Activated CD4-positive, alpha-beta T cell treated with anti-CD3 and anti-CD28 coated beads, Interleukin-2, amount 10 ng/mL, durations not matched to agents 24 days and 14 days (primary cell): ENCODE measurements at regions of chr11 and their contacts with region 1.

Region 1: GRCh38 chr11:105044921-105045524 is at the start of gene CARD16:
- DNase-seq: peak; percentile 85
- H3K4me3 Mint-ChIP-seq: peak within 1 kb of the TSS; percentile 88
- H3K27ac Mint-ChIP-seq: peak within 1 kb of the TSS; percentile 83
- H3K4me1 Mint-ChIP-seq: peaks cover 35% of the 10 kb centered on the region
- H3K27me3 Mint-ChIP-seq: no peaks in the 10 kb centered on the region
- total RNA-seq, gene CARD16: 7.2 and 9.0 TPM in 2 replicates

Region 2: GRCh38 chr11:104817973-104818372 is 227.1 kb before region 1 on chr11:
- intact Hi-C with region 1: no loop called
- DNase-seq: no peak
- H3K4me3 Mint-ChIP-seq: no peak overlapping the region
- H3K27ac Mint-ChIP-seq: no peak overlapping the region
- H3K4me1 Mint-ChIP-seq: peaks cover 2% of the 10 kb centered on the region
- H3K27me3 Mint-ChIP-seq: peaks cover 3% of the 10 kb centered on the region

Region 3: GRCh38 chr11:105034813-105035620 is 10.0 kb before region 1 on chr11 and contains the start of gene CASP1:
- intact Hi-C with region 1: loop called (anchors 1 kb)
- DNase-seq: peak; percentile 83
- H3K4me3 Mint-ChIP-seq: peak within 1 kb of the TSS; percentile 88
- H3K27ac Mint-ChIP-seq: peak within 1 kb of the TSS; percentile 91
- H3K4me1 Mint-ChIP-seq: peaks cover 38% of the 10 kb centered on the region
- H3K27me3 Mint-ChIP-seq: no peaks in the 10 kb centered on the region
- total RNA-seq, gene CASP1: 18.7 and 21.6 TPM in 2 replicates

Region 4: GRCh38 chr11:105078283-105078682 is 33.3 kb after region 1 on chr11:
- intact Hi-C with region 1: loop called (anchors 5 kb)
- DNase-seq: no peak
- H3K4me3 Mint-ChIP-seq: no peak overlapping the region
- H3K27ac Mint-ChIP-seq: no peak overlapping the region
- H3K4me1 Mint-ChIP-seq: peaks cover 18% of the 10 kb centered on the region
- H3K27me3 Mint-ChIP-seq: peaks cover 8% of the 10 kb centered on the region

Region 5: GRCh38 chr11:105100206-105100605 is 55.2 kb after region 1 on chr11:
- intact Hi-C with region 1: loop called (anchors 5 kb)
- DNase-seq: peak; percentile 74
- H3K4me3 Mint-ChIP-seq: peak overlapping the region; percentile 85
- H3K27ac Mint-ChIP-seq: peak overlapping the region; percentile 81
- H3K4me1 Mint-ChIP-seq: peaks cover 29% of the 10 kb centered on the region
- H3K27me3 Mint-ChIP-seq: no peaks in the 10 kb centered on the region

Region 6: GRCh38 chr11:105168457-105168856 is 123.4 kb after region 1 on chr11:
- intact Hi-C with region 1: no loop called
- DNase-seq: no peak
- H3K4me3 Mint-ChIP-seq: no peak overlapping the region
- H3K27ac Mint-ChIP-seq: no peak overlapping the region
- H3K4me1 Mint-ChIP-seq: no peaks in the 10 kb centered on the region
- H3K27me3 Mint-ChIP-seq: no peaks in the 10 kb centered on the region

Region 7: GRCh38 chr11:105296806-105297205 is 251.8 kb after region 1 on chr11:
- intact Hi-C with region 1: no loop called
- DNase-seq: no peak
- H3K4me3 Mint-ChIP-seq: no peak overlapping the region
- H3K27ac Mint-ChIP-seq: no peak overlapping the region
- H3K4me1 Mint-ChIP-seq: peaks cover 3% of the 10 kb centered on the region
- H3K27me3 Mint-ChIP-seq: no peaks in the 10 kb centered on the region

Region 8: DNA sequence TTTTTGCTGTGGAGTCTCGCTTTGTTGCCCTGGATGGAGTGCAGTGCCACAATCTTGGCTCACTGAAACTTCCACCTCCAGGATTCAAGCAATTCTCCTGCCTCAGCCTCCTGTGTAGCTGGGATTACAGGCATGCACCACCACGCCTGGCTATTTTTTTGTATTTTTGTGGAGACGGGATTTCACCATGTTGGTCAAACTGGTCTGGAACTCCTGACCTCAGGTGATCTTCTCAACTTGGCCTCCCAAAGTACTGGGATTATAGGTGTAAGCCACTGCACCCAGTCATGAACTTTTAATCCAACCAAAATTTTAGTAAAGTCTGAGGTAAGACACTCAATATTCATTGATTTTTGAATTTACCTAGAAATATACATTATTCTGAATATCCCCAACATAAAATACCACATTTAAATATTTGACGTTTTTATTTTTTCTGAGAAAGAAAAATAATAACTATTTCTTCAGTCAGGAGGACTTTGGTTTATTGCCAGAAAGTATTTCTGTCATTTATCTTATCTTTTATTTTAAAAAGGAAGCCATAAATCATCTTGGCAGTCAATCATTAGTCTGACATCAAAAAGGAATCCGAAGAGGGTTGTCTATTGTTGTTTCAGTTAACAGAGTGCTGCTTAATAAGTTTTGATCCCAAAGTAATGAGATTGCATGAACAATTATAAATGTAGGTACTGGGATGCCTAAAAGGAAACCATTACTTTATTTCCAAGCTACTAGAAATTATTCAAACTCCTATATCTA is 462.7 kb after region 1 on chr11:
- intact Hi-C with region 1: no loop called
- DNase-seq: no peak
- H3K4me3 Mint-ChIP-seq: no peak overlapping the region
- H3K27ac Mint-ChIP-seq: no peak overlapping the region
- H3K4me1 Mint-ChIP-seq: no peaks in the 10 kb centered on the region
- H3K27me3 Mint-ChIP-seq: no peaks in the 10 kb centered on the region